Natural killer cell (primary cell): ENCODE measurements at regions of chr11 and their contacts with region 1.

Region 1: GRCh38 chr11:102495161-102496042 is 35.1 kb downstream of the MMP7 start:
- DNase-seq: peak in 1 of 2 donors; percentile 92
- ATAC-seq: peak; percentile 83 to 93 (median 85)
- H3K4me3 ChIP-seq: no peak overlapping the region
- H3K4me3 Mint-ChIP-seq: no peak overlapping the region
- H3K27ac ChIP-seq: no peak overlapping the region
- H3K27ac Mint-ChIP-seq: no peak overlapping the region
- H3K4me1 ChIP-seq: no peaks in the 10 kb centered on the region
- H3K4me1 Mint-ChIP-seq: no peaks in the 10 kb centered on the region
- H3K27me3 ChIP-seq: peaks cover 2% of the 10 kb centered on the region
- H3K27me3 Mint-ChIP-seq: peaks cover 18 to 37% of the 10 kb centered on the region in 2 donors
- CTCF ChIP-seq: peak; percentile 81

Region 2: DNA sequence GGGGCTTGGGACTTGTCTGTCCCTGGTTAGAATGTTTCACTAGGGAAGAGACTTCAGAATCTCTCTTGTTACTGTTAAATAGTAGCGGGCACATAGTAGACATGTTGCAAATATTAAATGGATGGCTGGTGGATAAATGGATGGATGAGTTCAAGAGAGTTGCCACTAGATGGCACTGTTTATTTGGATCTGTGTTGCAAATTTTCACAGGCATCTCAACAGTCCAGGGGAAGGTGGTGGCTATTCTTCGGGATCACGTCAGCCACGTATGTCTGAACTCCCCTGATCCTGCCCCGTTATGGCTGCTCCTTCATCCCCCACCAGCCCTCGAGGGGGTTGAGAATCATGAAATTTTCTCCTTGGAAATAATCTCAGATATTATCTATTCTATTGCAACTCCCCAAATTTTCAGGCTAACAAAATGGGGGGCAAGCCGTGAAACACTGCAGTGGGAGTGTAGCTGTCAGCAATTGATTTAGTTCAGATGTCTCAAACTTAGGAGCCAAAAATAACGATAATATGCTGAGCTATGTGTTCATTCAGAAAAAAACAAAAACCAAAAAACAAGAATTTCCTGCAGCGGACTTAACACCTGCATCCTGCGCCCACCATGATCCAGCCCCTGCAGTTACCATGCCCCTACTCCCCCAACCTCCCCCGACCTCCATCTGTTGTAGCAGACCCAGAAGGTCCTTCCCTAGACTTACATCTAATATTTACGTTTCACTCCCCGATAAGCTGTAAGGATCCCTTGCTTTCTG is 207.3 kb before region 1 on chr11:
- intact Hi-C with region 1: loop called (anchors 1 kb)
- DNase-seq: peak in 1 of 2 donors; percentile 86
- ATAC-seq: peak; percentile 83 to 91 (median 87)
- H3K4me3 ChIP-seq: no peak overlapping the region
- H3K4me3 Mint-ChIP-seq: no peak overlapping the region
- H3K27ac ChIP-seq: no peak overlapping the region
- H3K27ac Mint-ChIP-seq: no peak overlapping the region
- H3K4me1 ChIP-seq: peaks cover 5% of the 10 kb centered on the region
- H3K4me1 Mint-ChIP-seq: no peaks in the 10 kb centered on the region
- H3K27me3 ChIP-seq: no peaks in the 10 kb centered on the region
- H3K27me3 Mint-ChIP-seq: no peaks in the 10 kb centered on the region
- CTCF ChIP-seq: peak; percentile 84

Region 3: GRCh38 chr11:102341844-102342318 is 153.5 kb before region 1 on chr11:
- intact Hi-C with region 1: loop called (anchors 1 kb)
- DNase-seq: peak; percentile 51 to 92
- ATAC-seq: peak; percentile 41 to 63 (median 47)
- H3K4me3 ChIP-seq: no peak overlapping the region
- H3K4me3 Mint-ChIP-seq: peak overlapping the region; percentile 5
- H3K27ac ChIP-seq: no peak overlapping the region
- H3K27ac Mint-ChIP-seq: no peak overlapping the region
- H3K4me1 ChIP-seq: peaks cover 6% of the 10 kb centered on the region
- H3K4me1 Mint-ChIP-seq: peaks cover 17 to 18% of the 10 kb centered on the region in 2 donors
- H3K27me3 ChIP-seq: no peaks in the 10 kb centered on the region
- H3K27me3 Mint-ChIP-seq: no peaks in the 10 kb centered on the region
- CTCF ChIP-seq: peak; percentile 84

Region 4: GRCh38 chr11:102390667-102391465 is 104.5 kb before region 1 on chr11:
- intact Hi-C with region 1: loop called (anchors 1 kb)
- DNase-seq: peak; percentile 37 to 80
- ATAC-seq: peak; percentile 86 to 97 (median 91)
- H3K4me3 ChIP-seq: no peak overlapping the region
- H3K4me3 Mint-ChIP-seq: no peak overlapping the region
- H3K27ac ChIP-seq: no peak overlapping the region
- H3K27ac Mint-ChIP-seq: no peak overlapping the region
- H3K4me1 ChIP-seq: no peaks in the 10 kb centered on the region
- H3K4me1 Mint-ChIP-seq: peaks cover 14 to 15% of the 10 kb centered on the region in 2 donors
- H3K27me3 ChIP-seq: no peaks in the 10 kb centered on the region
- H3K27me3 Mint-ChIP-seq: no peaks in the 10 kb centered on the region
- CTCF ChIP-seq: peak; percentile 86

Region 5: DNA sequence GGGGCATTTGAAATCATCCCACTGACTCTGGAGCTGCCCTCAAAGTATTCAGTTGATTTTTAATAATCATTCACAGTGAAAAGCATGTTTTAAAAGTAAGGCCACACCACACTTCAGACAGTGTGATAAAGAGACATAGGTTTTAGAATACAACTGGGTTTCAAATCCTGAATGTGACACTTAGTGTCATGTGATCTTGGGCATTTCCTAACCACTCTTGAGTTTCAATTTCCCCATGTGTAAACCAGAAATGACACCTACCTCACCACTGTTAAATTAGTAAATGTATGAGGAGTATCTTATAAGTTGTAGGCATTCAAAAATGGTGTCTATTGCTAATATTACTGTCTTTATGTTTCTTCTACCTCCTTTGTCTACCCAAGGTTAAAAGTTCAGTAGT is 48.2 kb before region 1 on chr11:
- intact Hi-C with region 1: no loop called
- DNase-seq: peak in 1 of 2 donors; percentile 79
- ATAC-seq: peak; percentile 66 to 83 (median 77)
- H3K4me3 ChIP-seq: no peak overlapping the region
- H3K4me3 Mint-ChIP-seq: peak overlapping the region; percentile 62
- H3K27ac ChIP-seq: peak overlapping the region; percentile 10
- H3K27ac Mint-ChIP-seq: peak overlapping the region; percentile 78 to 84
- H3K4me1 ChIP-seq: peaks cover 11% of the 10 kb centered on the region
- H3K4me1 Mint-ChIP-seq: peaks cover 87 to 89% of the 10 kb centered on the region in 2 donors
- H3K27me3 ChIP-seq: no peaks in the 10 kb centered on the region
- H3K27me3 Mint-ChIP-seq: peaks cover 6 to 7% of the 10 kb centered on the region in 2 donors
- CTCF ChIP-seq: no peak